MCF 10A (cell line): ENCODE measurements at regions of chr1 and their contacts with region 1.

Region 1: DNA sequence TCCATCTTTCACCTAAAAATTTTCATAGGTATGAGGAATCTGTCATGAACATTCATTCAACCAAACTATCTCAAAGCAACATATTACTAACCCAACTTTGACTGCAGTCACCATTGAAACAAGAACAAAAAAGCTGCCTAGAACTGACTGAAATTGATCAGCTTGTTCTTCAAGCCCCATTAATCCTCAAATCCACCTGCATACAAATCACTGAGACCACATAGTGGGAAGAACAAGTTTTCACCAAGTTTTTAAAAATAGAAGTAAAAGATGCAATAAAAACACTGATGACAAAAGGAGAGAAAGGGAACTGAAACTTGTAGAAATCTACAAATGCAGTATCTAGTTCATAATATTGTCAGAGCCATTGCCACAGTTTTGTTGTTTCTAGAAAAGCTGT is 6.1 kb downstream of the SORT1 start:
- DNase-seq: no peak
- H3K4me3 Mint-ChIP-seq: peak overlapping the region; percentile 43
- H3K27ac Mint-ChIP-seq: peak overlapping the region; percentile 98
- H3K4me1 Mint-ChIP-seq: peaks cover 60% of the 10 kb centered on the region
- H3K27me3 Mint-ChIP-seq: no peaks in the 10 kb centered on the region
- CTCF ChIP-seq: no peak

Region 2: DNA sequence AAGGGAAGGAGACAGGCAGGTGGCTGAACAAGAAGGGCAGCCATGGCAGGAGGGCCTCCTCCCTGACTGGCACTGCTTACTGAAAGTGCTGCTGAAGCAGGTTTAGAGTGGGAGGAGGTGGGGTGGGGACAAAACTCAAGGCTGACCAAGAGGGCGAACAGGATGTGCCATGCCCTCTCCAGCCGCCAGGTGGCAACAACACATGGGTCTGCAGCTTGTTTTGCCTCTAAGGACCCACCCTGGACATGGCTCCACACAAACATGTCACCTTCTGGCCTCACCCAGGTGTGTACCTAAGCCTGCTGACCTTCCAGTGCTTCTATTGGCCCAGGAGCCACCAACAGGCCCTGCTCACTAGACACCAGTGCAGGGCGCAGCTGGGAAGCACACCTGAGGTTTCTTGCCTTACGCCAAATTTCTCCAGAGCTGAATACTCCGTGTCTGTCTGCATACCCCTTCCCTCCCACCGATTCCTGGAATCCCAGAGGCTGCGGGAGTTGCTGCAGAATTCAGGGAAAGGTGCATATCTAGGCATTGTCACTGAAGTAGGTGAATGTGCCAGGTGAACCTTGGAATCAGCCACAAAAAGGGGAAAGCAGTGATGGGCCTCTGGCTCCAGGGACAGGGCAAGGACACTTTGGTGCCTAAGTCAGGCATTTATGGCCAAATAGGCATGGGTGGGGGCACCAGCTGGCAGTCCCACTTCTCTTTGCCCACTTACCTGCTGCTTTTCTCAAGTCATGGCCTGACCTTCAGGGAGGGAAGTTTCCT is 114.0 kb before region 1 on chr1:
- CTCF ChIA-PET with region 1: interaction called, 102 read pairs
- POLR2A ChIA-PET with region 1: interaction called, 35 read pairs
- intact Hi-C with region 1: no loop called
- DNase-seq: peak; percentile 70
- H3K4me3 Mint-ChIP-seq: no peak overlapping the region
- H3K27ac Mint-ChIP-seq: peak overlapping the region; percentile 16
- H3K4me1 Mint-ChIP-seq: peaks cover 48% of the 10 kb centered on the region
- H3K27me3 Mint-ChIP-seq: no peaks in the 10 kb centered on the region
- CTCF ChIP-seq: peak; percentile 92

Region 3: GRCh38 chr1:109347511-109347910 is 44.1 kb before region 1 on chr1:
- CTCF ChIA-PET with region 1: no interaction called
- POLR2A ChIA-PET with region 1: no interaction called
- intact Hi-C with region 1: no loop called
- DNase-seq: no peak
- H3K4me3 Mint-ChIP-seq: no peak overlapping the region
- H3K27ac Mint-ChIP-seq: no peak overlapping the region
- H3K4me1 Mint-ChIP-seq: no peaks in the 10 kb centered on the region
- H3K27me3 Mint-ChIP-seq: no peaks in the 10 kb centered on the region
- CTCF ChIP-seq: no peak

Region 4: DNA sequence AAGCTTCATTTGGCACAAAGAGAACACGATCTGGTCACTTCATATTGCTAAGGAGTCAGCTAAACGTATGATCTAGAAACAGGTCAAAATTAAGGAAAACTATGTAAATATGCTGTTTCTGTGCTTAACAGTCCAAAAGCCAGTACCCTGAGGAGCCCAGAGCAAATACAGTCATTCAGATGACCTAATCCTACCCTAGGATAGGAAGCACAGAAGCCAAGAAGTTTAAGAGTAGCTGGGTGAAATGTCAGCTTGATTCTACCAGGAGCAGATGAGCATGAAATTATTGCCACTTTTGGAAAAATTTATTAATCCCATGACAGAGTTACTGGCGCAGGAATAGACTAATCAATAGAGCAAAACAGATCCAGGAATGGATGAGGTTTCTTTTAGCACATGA is 12.2 kb before region 1 on chr1:
- CTCF ChIA-PET with region 1: interaction called, 8 read pairs
- POLR2A ChIA-PET with region 1: interaction called, 86 read pairs
- intact Hi-C with region 1: no loop called
- DNase-seq: no peak
- H3K4me3 Mint-ChIP-seq: no peak overlapping the region
- H3K27ac Mint-ChIP-seq: no peak overlapping the region
- H3K4me1 Mint-ChIP-seq: peaks cover 22% of the 10 kb centered on the region
- H3K27me3 Mint-ChIP-seq: no peaks in the 10 kb centered on the region
- CTCF ChIP-seq: no peak